GM23248 (cell line): ENCODE measurements at regions of chr5 and their contacts with region 1.

Region 1: GRCh38 chr5:167814828-167815227 is 476.6 kb upstream of the WWC1 start:
- DNase-seq: peak; percentile 97
- H3K4me3 ChIP-seq: no peak overlapping the region
- H3K27ac ChIP-seq: peak overlapping the region; percentile 91
- H3K4me1 ChIP-seq: peaks cover 59% of the 10 kb centered on the region
- H3K27me3 ChIP-seq: no peaks in the 10 kb centered on the region

Region 2: GRCh38 chr5:167723254-167723871 is 91.5 kb before region 1 on chr5:
- in situ Hi-C with region 1: loop called (anchors 10 kb)
- DNase-seq: peak; percentile 79
- H3K4me3 ChIP-seq: no peak overlapping the region
- H3K27ac ChIP-seq: peak overlapping the region; percentile 39
- H3K4me1 ChIP-seq: peaks cover 35% of the 10 kb centered on the region
- H3K27me3 ChIP-seq: no peaks in the 10 kb centered on the region